ENCODE measurements at regions of chr11 and their contacts with region 1.

Region 1: GRCh38 chr11:107770551-107770951 is 58.7 kb upstream of the SLN start:
- DNase-seq: no peak

Region 2: GRCh38 chr11:107563702-107564101 is 206.8 kb before region 1 on chr11:
- intact Hi-C with region 1: loop called (anchors 5 kb)
- DNase-seq: peak in 1 of 10 donors; percentile 25

Region 3: GRCh38 chr11:107573438-107573837 is 197.1 kb before region 1 on chr11:
- intact Hi-C with region 1: loop called (anchors 2 kb)
- DNase-seq: no peak

Measured in posterior cingulate gyrus (tissue), 11 donors.